ENCODE measurements at regions of chr11 and their contacts with region 1.

Region 1: GRCh38 chr11:101848262-101848661 is 66.5 kb upstream of the CEP126 start:
- DNase-seq: peak; percentile 44
- ATAC-seq: no peak
- H3K4me3 ChIP-seq: no peak overlapping the region
- H3K27ac ChIP-seq: no peak overlapping the region
- H3K4me1 ChIP-seq: no peaks in the 10 kb centered on the region
- H3K27me3 ChIP-seq: no peaks in the 10 kb centered on the region
- CTCF ChIP-seq: peak; percentile 56
- POLR2A ChIP-seq: no peak
- RAD21 ChIP-seq: peak; percentile 44

Region 2: DNA sequence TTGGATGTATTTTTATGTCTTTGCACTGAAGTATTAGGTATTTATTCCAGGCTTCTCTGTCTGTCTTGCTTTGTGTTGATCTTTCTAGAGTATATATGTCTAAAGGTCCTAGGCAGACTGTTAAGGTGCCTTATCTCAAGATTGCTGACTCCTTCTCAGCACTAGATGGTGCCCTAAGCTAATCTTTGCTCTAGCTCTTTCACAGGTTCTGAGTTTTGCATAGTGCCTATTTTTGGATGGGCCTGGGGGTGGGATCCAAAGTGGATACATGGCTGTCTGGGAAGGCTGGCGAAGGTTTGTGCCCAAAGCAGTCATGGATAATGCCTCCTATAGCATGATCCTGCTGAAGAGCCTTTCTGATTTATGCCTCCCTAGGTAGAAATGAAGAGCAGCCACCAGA is 419.3 kb before region 1 on chr11:
- CTCF ChIA-PET with region 1: interaction called, 3 read pairs
- POLR2A ChIA-PET with region 1: no interaction called
- dilution Hi-C with region 1: no loop called
- in situ Hi-C with region 1: no loop called
- intact Hi-C with region 1: loop called (anchors 1 kb)
- DNase-seq: peak; percentile 54
- ATAC-seq: peak; percentile 80
- H3K4me3 ChIP-seq: no peak overlapping the region
- H3K27ac ChIP-seq: no peak overlapping the region
- H3K4me1 ChIP-seq: peaks cover 7% of the 10 kb centered on the region
- H3K27me3 ChIP-seq: no peaks in the 10 kb centered on the region
- CTCF ChIP-seq: peak; percentile 63
- POLR2A ChIP-seq: no peak
- RAD21 ChIP-seq: peak; percentile 79

Region 3: GRCh38 chr11:101444164-101444563 is 404.1 kb before region 1 on chr11:
- CTCF ChIA-PET with region 1: no interaction called
- POLR2A ChIA-PET with region 1: no interaction called
- dilution Hi-C with region 1: no loop called
- in situ Hi-C with region 1: loop called (anchors 10 kb)
- intact Hi-C with region 1: no loop called
- DNase-seq: no peak
- ATAC-seq: no peak
- H3K4me3 ChIP-seq: no peak overlapping the region
- H3K27ac ChIP-seq: no peak overlapping the region
- H3K4me1 ChIP-seq: peaks cover 18% of the 10 kb centered on the region
- H3K27me3 ChIP-seq: no peaks in the 10 kb centered on the region
- CTCF ChIP-seq: no peak
- POLR2A ChIP-seq: no peak
- RAD21 ChIP-seq: no peak

Region 4: GRCh38 chr11:101456812-101457211 is 391.4 kb before region 1 on chr11:
- CTCF ChIA-PET with region 1: interaction called, 15 read pairs
- POLR2A ChIA-PET with region 1: no interaction called
- dilution Hi-C with region 1: no loop called
- in situ Hi-C with region 1: no loop called
- intact Hi-C with region 1: loop called (anchors 1 kb)
- DNase-seq: peak; percentile 52
- ATAC-seq: peak; percentile 56
- H3K4me3 ChIP-seq: no peak overlapping the region
- H3K27ac ChIP-seq: no peak overlapping the region
- H3K4me1 ChIP-seq: peaks cover 5% of the 10 kb centered on the region; the same call in 1 of the 2 replicates
- H3K27me3 ChIP-seq: no peaks in the 10 kb centered on the region
- CTCF ChIP-seq: peak; percentile 68
- POLR2A ChIP-seq: no peak
- RAD21 ChIP-seq: peak; percentile 70

Region 5: GRCh38 chr11:101583251-101584128 is 264.8 kb before region 1 on chr11 and contains the start of gene TRPC6:
- CTCF ChIA-PET with region 1: no interaction called
- POLR2A ChIA-PET with region 1: no interaction called
- dilution Hi-C with region 1: no loop called
- in situ Hi-C with region 1: loop called (anchors 10 kb)
- intact Hi-C with region 1: no loop called
- DNase-seq: peak; percentile 47
- ATAC-seq: peak; percentile 81
- H3K4me3 ChIP-seq: peak within 1 kb of the TSS; percentile 97
- H3K27ac ChIP-seq: peak within 1 kb of the TSS; percentile 42
- H3K4me1 ChIP-seq: no peaks in the 10 kb centered on the region
- H3K27me3 ChIP-seq: no peaks in the 10 kb centered on the region
- CTCF ChIP-seq: no peak
- POLR2A ChIP-seq: no peak
- RAD21 ChIP-seq: no peak
- total RNA-seq, gene TRPC6: 2.3 and 3.1 TPM in 2 replicates

Region 6: GRCh38 chr11:101668236-101668635 is 180.0 kb before region 1 on chr11:
- CTCF ChIA-PET with region 1: no interaction called
- POLR2A ChIA-PET with region 1: no interaction called
- dilution Hi-C with region 1: no loop called
- in situ Hi-C with region 1: no loop called
- intact Hi-C with region 1: no loop called
- DNase-seq: no peak
- ATAC-seq: no peak
- H3K4me3 ChIP-seq: no peak overlapping the region
- H3K27ac ChIP-seq: no peak overlapping the region
- H3K4me1 ChIP-seq: peaks cover 2% of the 10 kb centered on the region; the same call in 1 of the 2 replicates
- H3K27me3 ChIP-seq: 0 out of 2 replicates have a peak, but pooled peaks cover 2% of the 10 kb centered on the region
- CTCF ChIP-seq: no peak
- POLR2A ChIP-seq: no peak
- RAD21 ChIP-seq: no peak

Region 7: GRCh38 chr11:101748572-101749344 is 99.5 kb before region 1 on chr11:
- CTCF ChIA-PET with region 1: no interaction called
- POLR2A ChIA-PET with region 1: no interaction called
- dilution Hi-C with region 1: no loop called
- in situ Hi-C with region 1: no loop called
- intact Hi-C with region 1: loop called (anchors 5 kb)
- DNase-seq: peak; percentile 10
- ATAC-seq: peak; percentile 61
- H3K4me3 ChIP-seq: peak overlapping the region; percentile 44; the same call in 1 of the 2 replicates
- H3K27ac ChIP-seq: peak overlapping the region; percentile 80; the same call in 1 of the 2 replicates
- H3K4me1 ChIP-seq: peaks cover 6% of the 10 kb centered on the region
- H3K27me3 ChIP-seq: no peaks in the 10 kb centered on the region
- CTCF ChIP-seq: no peak
- POLR2A ChIP-seq: no peak
- RAD21 ChIP-seq: no peak

Region 8: GRCh38 chr11:101759771-101760450 is 88.4 kb before region 1 on chr11:
- CTCF ChIA-PET with region 1: interaction called, 3 read pairs
- POLR2A ChIA-PET with region 1: no interaction called
- dilution Hi-C with region 1: no loop called
- in situ Hi-C with region 1: no loop called
- intact Hi-C with region 1: loop called (anchors 2 kb)
- DNase-seq: peak; percentile 23
- ATAC-seq: peak; percentile 53; the same call in 1 of the 2 replicates
- H3K4me3 ChIP-seq: no peak overlapping the region
- H3K27ac ChIP-seq: no peak overlapping the region
- H3K4me1 ChIP-seq: no peaks in the 10 kb centered on the region
- H3K27me3 ChIP-seq: no peaks in the 10 kb centered on the region
- CTCF ChIP-seq: peak; percentile 31; the same call in 1 of the 2 replicates
- POLR2A ChIP-seq: no peak
- RAD21 ChIP-seq: 0 out of 2 replicates have a peak, but pooled peaks have one; percentile 14